ENCODE measurements at regions of chr13 and their contacts with region 1.

Region 1: DNA sequence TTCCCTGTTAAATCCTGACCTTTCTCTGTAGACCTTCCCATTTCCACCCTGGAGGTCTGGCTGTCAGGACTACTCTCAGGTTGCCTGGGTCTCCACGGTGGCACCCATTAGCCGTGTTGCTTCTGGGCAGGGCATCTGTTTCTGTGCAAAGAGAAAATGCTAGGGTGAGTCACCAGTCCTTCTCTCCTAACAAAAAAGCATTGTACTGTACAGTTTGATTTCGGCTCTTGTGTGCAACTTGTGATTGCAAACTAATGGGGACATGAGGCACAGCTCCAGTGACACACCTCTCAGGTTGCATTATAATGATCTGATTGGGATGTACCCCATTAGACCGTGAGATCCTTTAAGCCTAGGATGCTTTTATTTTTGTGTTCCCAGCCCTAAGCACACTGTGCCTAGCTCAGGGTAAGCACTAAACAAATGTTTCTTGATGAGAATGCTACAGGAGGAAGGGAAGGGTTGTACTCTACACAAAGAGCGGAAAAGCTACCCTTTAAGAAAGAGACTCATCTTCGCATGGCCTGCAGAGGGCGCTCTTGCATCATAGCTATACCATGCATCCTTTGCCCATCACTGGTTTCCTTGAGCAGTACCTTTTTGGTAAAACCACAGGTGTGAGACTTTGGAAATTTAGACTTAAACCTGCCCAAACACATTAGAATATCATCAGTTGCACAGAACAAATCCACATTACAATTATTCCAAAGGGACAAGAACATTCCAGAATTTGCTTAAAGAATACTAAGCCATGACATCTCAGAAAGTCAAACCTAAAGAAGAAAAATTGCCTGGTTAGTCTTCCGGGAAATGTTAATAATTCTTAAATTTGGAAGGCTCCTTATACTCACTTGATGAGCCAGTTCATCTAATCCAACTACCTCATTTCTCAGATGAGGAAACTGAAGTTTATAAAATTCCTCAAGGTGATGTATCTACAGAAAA is 20.3 kb upstream of the TRIM13 start:
- DNase-seq: peak; percentile 75
- CTCF ChIP-seq: peak; percentile 78

Region 2: DNA sequence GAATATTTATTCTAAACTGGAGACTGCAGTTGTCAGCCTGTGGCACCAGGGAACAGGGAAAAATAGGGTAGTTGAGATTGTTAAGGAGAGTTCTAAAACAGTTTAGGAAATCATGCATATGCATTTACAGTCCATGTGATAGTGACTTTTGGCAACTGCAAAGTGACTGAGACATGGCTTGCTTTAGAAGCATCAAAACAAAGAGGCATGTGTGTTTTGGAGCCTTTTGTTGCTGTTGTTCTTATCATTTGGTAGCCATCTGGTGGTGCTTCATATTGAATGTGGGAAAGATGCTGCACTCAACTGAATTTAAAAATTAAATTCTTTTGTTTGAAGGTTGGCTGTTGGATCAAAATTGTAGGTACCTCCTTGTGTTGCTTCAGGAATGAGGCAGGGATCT is 275.1 kb before region 1 on chr13:
- in situ Hi-C with region 1: no loop called
- DNase-seq: no peak
- CTCF ChIP-seq: no peak

Region 3: DNA sequence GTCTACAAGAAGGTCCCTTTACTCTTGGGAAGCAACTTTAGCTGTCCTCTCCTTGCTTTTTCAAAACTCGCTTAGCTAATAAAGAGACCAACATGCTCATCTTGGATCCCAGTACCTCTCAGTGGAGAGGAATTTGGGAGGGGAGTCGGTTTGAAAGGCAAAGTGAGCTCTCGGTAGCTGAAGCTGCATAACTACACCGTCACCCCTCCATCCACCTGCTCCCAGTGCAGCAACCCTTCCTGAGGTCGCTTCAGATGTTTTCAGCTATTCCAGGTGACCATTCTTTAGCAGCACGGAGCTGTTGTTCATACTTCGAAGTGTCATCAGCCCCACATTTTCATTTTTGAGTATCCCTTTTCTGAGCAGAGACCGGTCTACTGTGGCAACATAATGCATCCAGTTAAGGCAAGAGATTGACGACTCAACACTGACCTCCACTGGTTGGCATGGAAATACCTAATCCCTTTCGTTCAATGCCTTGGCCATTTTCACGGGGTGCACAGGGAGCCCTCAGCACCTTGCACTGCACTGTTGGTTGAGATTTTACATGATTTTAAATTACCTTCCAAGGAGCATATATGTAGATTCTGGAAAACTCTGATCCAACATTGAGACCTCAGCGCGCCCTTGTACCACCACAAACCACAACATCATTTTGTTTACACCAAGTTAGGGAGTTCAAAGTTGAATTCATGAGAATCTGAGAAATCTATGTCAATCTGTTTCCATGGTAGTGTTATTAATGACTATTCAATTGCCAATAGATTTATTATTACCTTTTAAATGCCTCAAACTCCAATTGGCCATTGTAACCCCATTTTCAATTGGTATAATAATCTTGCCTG is 824.7 kb after region 1 on chr13:
- in situ Hi-C with region 1: loop called (anchors 10 kb)
- DNase-seq: peak; percentile 38
- CTCF ChIP-seq: peak; percentile 83

Region 4: GRCh38 chr13:51083706-51084105 is 1107.1 kb after region 1 on chr13:
- in situ Hi-C with region 1: loop called (anchors 10 kb)
- DNase-seq: no peak
- CTCF ChIP-seq: no peak

Measured in GM13977 (cell line).